Activated T-helper 2 cell treated with anti-CD3 and anti-CD28 coated beads, Interferon-gamma antibody, Interleukin-2, Interleukin-4, amounts not matched to agents 10 μg/mL and 5 μg/mL and 100 μg/mL, durations not matched to agents 14 hours and 24 hours and 36 hours (primary cell): ENCODE measurements at regions of chr5 and their contacts with region 1.

Region 1: GRCh38 chr5:112757468-112758208 is 20.0 kb downstream of the APC start:
- DNase-seq: no peak
- H3K4me3 Mint-ChIP-seq: no peak overlapping the region
- H3K27ac Mint-ChIP-seq: no peak overlapping the region
- H3K4me1 Mint-ChIP-seq: peaks cover 2% of the 10 kb centered on the region
- H3K27me3 Mint-ChIP-seq: no peaks in the 10 kb centered on the region

Region 2: DNA sequence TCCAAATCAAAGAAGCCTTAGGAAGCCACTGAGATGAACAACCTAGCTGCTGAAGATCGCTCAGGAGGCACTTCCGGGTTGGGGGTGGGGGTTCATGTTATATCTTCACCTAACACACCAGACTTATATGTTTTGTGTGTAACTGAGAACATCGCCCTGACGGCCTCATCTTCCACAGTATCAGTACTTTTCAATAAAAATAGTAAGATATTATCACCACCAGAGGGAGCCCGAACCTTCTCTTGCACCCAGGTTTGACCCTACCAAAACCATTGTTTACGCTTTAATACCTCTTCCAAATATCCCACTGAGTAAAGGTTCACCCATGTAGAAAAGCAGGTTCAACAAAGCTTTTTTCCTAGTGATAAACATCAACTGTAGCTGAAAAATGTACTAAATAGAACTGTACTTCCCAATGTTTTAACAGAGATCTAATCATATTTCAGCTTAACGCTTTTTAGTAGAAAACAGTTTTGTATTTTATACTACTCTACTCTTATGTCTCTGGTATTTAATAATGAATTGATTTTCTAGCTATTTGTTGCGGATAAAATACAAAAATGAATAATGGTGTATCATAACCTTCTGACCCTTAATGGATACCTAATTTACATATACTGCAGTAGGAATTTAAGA is 582.6 kb before region 1 on chr5:
- intact Hi-C with region 1: loop called (anchors 2 kb)
- DNase-seq: peak; percentile 11
- H3K4me3 Mint-ChIP-seq: no peak overlapping the region
- H3K27ac Mint-ChIP-seq: no peak overlapping the region
- H3K4me1 Mint-ChIP-seq: peaks cover 3% of the 10 kb centered on the region
- H3K27me3 Mint-ChIP-seq: peaks cover 21% of the 10 kb centered on the region

Region 3: GRCh38 chr5:112551419-112552032 is 206.1 kb before region 1 on chr5:
- intact Hi-C with region 1: loop called (anchors 1 kb)
- DNase-seq: no peak
- H3K4me3 Mint-ChIP-seq: no peak overlapping the region
- H3K27ac Mint-ChIP-seq: no peak overlapping the region
- H3K4me1 Mint-ChIP-seq: no peaks in the 10 kb centered on the region
- H3K27me3 Mint-ChIP-seq: peaks cover 8% of the 10 kb centered on the region

Region 4: GRCh38 chr5:112691758-112692157 is 65.9 kb before region 1 on chr5:
- intact Hi-C with region 1: loop called (anchors 1 kb)
- DNase-seq: no peak
- H3K4me3 Mint-ChIP-seq: no peak overlapping the region
- H3K27ac Mint-ChIP-seq: no peak overlapping the region
- H3K4me1 Mint-ChIP-seq: peaks cover 8% of the 10 kb centered on the region
- H3K27me3 Mint-ChIP-seq: peaks cover 48% of the 10 kb centered on the region

Region 5: DNA sequence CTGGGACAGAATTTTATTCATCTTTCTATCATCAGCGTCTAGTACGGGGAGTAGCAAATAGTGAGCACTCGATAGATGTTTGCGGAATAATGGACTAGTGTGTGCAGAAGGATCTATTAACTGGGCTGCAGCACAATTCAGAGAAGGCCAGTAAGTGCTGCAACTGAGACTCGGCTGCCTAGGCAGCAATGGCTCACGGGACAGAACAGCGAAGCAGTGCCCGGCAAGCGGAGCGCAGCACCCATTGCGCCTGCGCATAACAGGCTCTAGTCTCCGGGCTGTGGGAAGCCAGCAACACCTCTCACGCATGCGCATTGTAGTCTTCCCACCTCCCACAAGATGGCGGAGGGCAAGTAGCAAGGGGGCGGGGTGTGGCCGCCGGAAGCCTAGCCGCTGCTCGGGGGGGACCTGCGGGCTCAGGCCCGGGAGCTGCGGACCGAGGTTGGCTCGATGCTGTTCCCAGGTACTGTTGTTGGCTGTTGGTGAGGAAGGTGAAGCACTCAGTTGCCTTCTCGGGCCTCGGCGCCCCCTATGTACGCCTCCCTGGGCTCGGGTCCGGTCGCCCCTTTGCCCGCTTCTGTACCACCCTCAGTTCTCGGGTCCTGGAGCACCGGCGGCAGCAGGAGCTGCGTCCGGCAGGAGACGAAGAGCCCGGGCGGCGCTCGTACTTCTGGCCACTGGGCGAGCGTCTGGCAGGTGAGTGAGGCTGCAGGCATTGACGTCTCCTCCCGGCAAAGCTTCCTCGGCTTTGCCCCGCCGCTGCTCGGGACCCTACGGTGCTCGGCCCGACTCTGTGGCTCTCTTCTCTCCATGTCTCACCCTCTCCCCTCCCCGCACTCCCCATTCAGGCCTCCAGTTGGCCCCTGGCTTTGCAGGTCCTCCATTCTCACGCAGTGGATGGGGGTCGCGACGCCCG is 50.2 kb before region 1 on chr5:
- intact Hi-C with region 1: loop called (anchors 5 kb)
- DNase-seq: peak; percentile 98
- H3K4me3 Mint-ChIP-seq: peak overlapping the region; percentile 93
- H3K27ac Mint-ChIP-seq: peak overlapping the region; percentile 71
- H3K4me1 Mint-ChIP-seq: peaks cover 35% of the 10 kb centered on the region
- H3K27me3 Mint-ChIP-seq: peaks cover 3% of the 10 kb centered on the region